Activated CD4-positive, alpha-beta T cell treated with anti-CD3 and anti-CD28 coated beads for 36 hours (primary cell): ENCODE measurements at regions of chr5 and their contacts with region 1.

Region 1: GRCh38 chr5:134380346-134380745 is 9.0 kb downstream of the UBE2B start:
- DNase-seq: no peak
- ATAC-seq: no peak
- H3K4me3 Mint-ChIP-seq: no peak overlapping the region
- H3K27ac Mint-ChIP-seq: peak overlapping the region; percentile 73
- H3K4me1 Mint-ChIP-seq: peaks cover 40% of the 10 kb centered on the region
- H3K27me3 Mint-ChIP-seq: no peaks in the 10 kb centered on the region

Region 2: GRCh38 chr5:134328619-134329018 is 51.7 kb before region 1 on chr5:
- CTCF ChIA-PET with region 1: no interaction called
- POLR2A ChIA-PET with region 1: no interaction called
- intact Hi-C with region 1: no loop called
- DNase-seq: no peak
- ATAC-seq: no peak
- H3K4me3 Mint-ChIP-seq: no peak overlapping the region
- H3K27ac Mint-ChIP-seq: no peak overlapping the region
- H3K4me1 Mint-ChIP-seq: no peaks in the 10 kb centered on the region
- H3K27me3 Mint-ChIP-seq: no peaks in the 10 kb centered on the region

Region 3: DNA sequence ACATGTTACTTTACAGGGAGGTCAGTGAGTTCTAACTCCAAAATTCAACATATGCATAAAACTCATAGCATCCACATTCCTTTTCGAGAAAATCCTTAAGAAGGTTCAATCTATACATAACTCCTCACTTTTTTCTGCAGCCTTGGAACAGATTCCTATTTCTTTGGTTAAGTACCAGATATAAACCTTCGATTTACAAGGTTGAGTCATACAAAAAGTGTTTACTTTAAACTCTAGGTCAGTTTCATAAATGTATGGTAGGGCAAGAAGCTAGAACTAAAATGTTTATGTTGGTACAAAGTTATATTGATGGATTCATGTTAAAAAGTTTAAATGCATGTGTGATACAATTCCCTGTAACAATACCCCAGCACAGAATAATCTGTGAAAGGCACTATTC is 12.0 kb after region 1 on chr5:
- CTCF ChIA-PET with region 1: interaction called, 29 read pairs
- POLR2A ChIA-PET with region 1: interaction called, 6 read pairs
- intact Hi-C with region 1: no loop called
- DNase-seq: no peak
- ATAC-seq: no peak
- H3K4me3 Mint-ChIP-seq: no peak overlapping the region
- H3K27ac Mint-ChIP-seq: no peak overlapping the region
- H3K4me1 Mint-ChIP-seq: peaks cover 2% of the 10 kb centered on the region
- H3K27me3 Mint-ChIP-seq: no peaks in the 10 kb centered on the region